B cell (primary cell): ENCODE measurements at regions of chr7 and their contacts with region 1.

Region 1: GRCh38 chr7:155298834-155299534 is 1.3 kb downstream of the INSIG1 start:
- DNase-seq: peak; percentile 98
- ATAC-seq: peak; percentile 72
- H3K4me3 ChIP-seq: peak overlapping the region; percentile 58 to 91 (median 79)
- H3K4me3 Mint-ChIP-seq: peak overlapping the region; percentile 94
- H3K27ac ChIP-seq: peak overlapping the region; percentile 88 to 98
- H3K27ac Mint-ChIP-seq: peak overlapping the region; percentile 97
- H3K4me1 ChIP-seq: peaks cover 26 to 34% of the 10 kb centered on the region in 2 donors
- H3K4me1 Mint-ChIP-seq: peaks cover 38% of the 10 kb centered on the region
- H3K27me3 ChIP-seq: no peaks in the 10 kb centered on the region
- H3K27me3 Mint-ChIP-seq: no peaks in the 10 kb centered on the region
- CTCF ChIP-seq: no peak

Region 2: DNA sequence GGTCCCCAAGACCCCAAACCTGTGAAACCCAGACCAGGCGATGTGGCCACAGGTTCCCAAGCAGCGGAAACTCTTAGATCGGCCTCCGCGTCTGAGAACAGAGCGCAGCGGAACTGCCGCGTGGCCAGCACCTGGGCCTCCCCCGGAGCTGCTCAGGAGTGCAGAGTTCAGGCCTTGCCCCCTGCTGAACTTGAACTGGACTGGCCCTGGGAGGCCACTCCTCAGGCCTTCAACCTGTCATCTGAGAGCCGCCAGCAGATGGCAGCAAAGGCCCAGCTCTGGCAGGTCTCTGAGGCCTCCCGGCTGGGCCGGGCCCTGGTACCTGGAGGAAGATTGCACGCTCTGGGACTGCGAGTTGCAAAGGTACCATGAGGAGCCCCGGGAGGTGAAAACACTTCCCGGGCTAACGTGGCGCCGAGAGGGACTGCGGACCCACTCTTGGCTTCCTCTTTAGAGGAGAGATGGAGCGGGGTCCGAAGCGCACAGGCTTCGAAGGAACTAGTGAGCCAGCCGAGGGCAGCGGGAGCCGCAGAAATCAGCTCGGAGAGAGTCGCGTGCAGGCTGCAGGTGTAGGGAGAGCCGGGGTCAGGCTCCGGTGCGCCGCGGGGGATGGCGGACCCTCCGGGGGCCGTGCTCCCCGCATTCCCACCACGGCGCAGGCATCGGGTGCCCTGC is 385.2 kb before region 1 on chr7:
- CTCF ChIA-PET with region 1: interaction called, 7 read pairs
- POLR2A ChIA-PET with region 1: no interaction called
- intact Hi-C with region 1: loop called (anchors 5 kb)
- DNase-seq: peak; percentile 86
- ATAC-seq: peak; percentile 97
- H3K4me3 ChIP-seq: peak overlapping the region in 4 of 5 experiments; percentile 38 to 64 (median 50)
- H3K4me3 Mint-ChIP-seq: peak overlapping the region; percentile 92
- H3K27ac ChIP-seq: no peak overlapping the region
- H3K27ac Mint-ChIP-seq: no peak overlapping the region
- H3K4me1 ChIP-seq: peaks cover 7 to 9% of the 10 kb centered on the region in 2 donors
- H3K4me1 Mint-ChIP-seq: peaks cover 5% of the 10 kb centered on the region
- H3K27me3 ChIP-seq: peaks cover 0 to 20% (median 9%) of the 10 kb centered on the region in 4 experiments
- H3K27me3 Mint-ChIP-seq: peaks cover 45% of the 10 kb centered on the region
- CTCF ChIP-seq: peak; percentile 96

Region 3: DNA sequence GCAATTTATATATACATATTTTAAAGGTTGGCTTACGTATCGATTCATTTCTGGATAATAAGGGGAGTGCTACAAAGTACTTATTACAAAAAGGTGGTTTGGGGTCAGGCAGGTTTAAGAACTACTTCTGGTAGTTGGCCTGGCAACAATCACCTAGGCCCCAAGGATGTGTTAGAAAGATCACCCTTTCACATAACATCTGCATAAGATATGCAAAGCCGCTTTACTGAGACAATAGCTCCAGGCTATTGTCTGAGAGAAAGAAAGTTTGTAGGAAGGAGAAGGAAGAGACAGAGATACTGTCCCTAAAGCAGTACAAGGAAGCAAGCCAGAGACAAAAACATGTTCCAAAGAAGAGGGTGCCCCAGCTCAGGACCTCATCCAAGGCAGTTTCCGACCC is 302.2 kb before region 1 on chr7:
- CTCF ChIA-PET with region 1: no interaction called
- POLR2A ChIA-PET with region 1: no interaction called
- intact Hi-C with region 1: no loop called
- DNase-seq: no peak
- ATAC-seq: no peak
- H3K4me3 ChIP-seq: no peak overlapping the region
- H3K4me3 Mint-ChIP-seq: no peak overlapping the region
- H3K27ac ChIP-seq: no peak overlapping the region
- H3K27ac Mint-ChIP-seq: no peak overlapping the region
- H3K4me1 ChIP-seq: peaks cover 1 to 2% of the 10 kb centered on the region in 2 donors
- H3K4me1 Mint-ChIP-seq: peaks cover 2% of the 10 kb centered on the region
- H3K27me3 ChIP-seq: no peaks in the 10 kb centered on the region
- H3K27me3 Mint-ChIP-seq: no peaks in the 10 kb centered on the region
- CTCF ChIP-seq: no peak

Region 4: GRCh38 chr7:155190688-155191087 is 108.3 kb before region 1 on chr7:
- CTCF ChIA-PET with region 1: interaction called, 10 read pairs
- POLR2A ChIA-PET with region 1: no interaction called
- intact Hi-C with region 1: loop called (anchors 5 kb)
- DNase-seq: peak; percentile 68
- ATAC-seq: peak; percentile 85
- H3K4me3 ChIP-seq: no peak overlapping the region
- H3K4me3 Mint-ChIP-seq: no peak overlapping the region
- H3K27ac ChIP-seq: no peak overlapping the region
- H3K27ac Mint-ChIP-seq: no peak overlapping the region
- H3K4me1 ChIP-seq: peaks cover 4 to 5% of the 10 kb centered on the region in 2 donors
- H3K4me1 Mint-ChIP-seq: peaks cover 2% of the 10 kb centered on the region
- H3K27me3 ChIP-seq: peaks cover 0 to 4% (median 2%) of the 10 kb centered on the region in 4 experiments
- H3K27me3 Mint-ChIP-seq: peaks cover 10% of the 10 kb centered on the region
- CTCF ChIP-seq: peak; percentile 86

Region 5: DNA sequence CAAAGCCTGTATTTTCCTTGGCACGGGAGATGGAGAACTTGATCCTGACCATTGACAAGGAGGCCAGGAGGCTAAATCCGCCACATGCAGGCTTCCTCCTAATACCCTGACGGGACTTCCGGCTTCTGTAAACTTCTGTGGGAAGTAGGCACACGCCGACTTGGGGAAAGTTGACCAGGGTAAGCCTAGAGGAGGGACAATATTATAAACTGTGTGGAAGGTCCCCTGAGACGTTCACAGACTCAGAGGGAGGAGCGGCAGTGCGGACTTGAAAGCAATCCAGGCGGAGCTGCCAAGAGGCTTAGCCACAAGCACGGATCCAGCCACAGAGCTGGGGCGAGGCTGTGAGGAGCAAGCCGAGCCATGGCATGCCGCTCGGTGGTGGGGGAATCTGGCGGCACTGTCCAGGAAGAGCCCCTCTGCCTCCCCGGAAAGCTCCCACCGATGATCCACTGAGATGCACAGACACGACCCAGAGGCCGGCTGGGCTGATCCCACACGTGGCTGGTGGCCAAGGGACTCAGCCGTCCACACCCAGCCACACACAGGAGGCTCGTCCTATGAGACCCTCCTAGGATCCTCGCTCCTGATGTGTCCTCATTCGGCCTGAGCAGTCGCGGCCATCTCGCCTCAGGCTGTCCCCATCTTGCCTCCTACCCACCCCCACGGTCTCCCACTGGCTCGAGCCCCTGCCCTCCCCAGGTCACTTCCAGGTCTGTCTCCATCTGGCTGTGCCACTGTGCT is 41.3 kb before region 1 on chr7:
- CTCF ChIA-PET with region 1: no interaction called
- POLR2A ChIA-PET with region 1: no interaction called
- intact Hi-C with region 1: no loop called
- DNase-seq: no peak
- ATAC-seq: no peak
- H3K4me3 ChIP-seq: no peak overlapping the region
- H3K4me3 Mint-ChIP-seq: no peak overlapping the region
- H3K27ac ChIP-seq: no peak overlapping the region
- H3K27ac Mint-ChIP-seq: no peak overlapping the region
- H3K4me1 ChIP-seq: no peaks in the 10 kb centered on the region
- H3K4me1 Mint-ChIP-seq: no peaks in the 10 kb centered on the region
- H3K27me3 ChIP-seq: no peaks in the 10 kb centered on the region
- H3K27me3 Mint-ChIP-seq: peaks cover 18% of the 10 kb centered on the region
- CTCF ChIP-seq: no peak

Region 6: GRCh38 chr7:155344600-155345433 is 45.8 kb after region 1 on chr7:
- CTCF ChIA-PET with region 1: interaction called, 76 read pairs
- POLR2A ChIA-PET with region 1: interaction called, 4 read pairs
- intact Hi-C with region 1: no loop called
- DNase-seq: peak; percentile 88
- ATAC-seq: peak; percentile 91
- H3K4me3 ChIP-seq: peak overlapping the region in 4 of 5 experiments; percentile 25 to 58 (median 52)
- H3K4me3 Mint-ChIP-seq: peak overlapping the region; percentile 82
- H3K27ac ChIP-seq: no peak overlapping the region
- H3K27ac Mint-ChIP-seq: peak overlapping the region; percentile 71
- H3K4me1 ChIP-seq: peaks cover 12 to 13% of the 10 kb centered on the region in 2 donors
- H3K4me1 Mint-ChIP-seq: peaks cover 5% of the 10 kb centered on the region
- H3K27me3 ChIP-seq: peaks cover 0 to 26% (median 6%) of the 10 kb centered on the region in 4 experiments
- H3K27me3 Mint-ChIP-seq: peaks cover 4% of the 10 kb centered on the region
- CTCF ChIP-seq: peak; percentile 89

Region 7: GRCh38 chr7:155584763-155585531 is 286.0 kb after region 1 on chr7:
- CTCF ChIA-PET with region 1: no interaction called
- POLR2A ChIA-PET with region 1: no interaction called
- intact Hi-C with region 1: no loop called
- DNase-seq: no peak
- ATAC-seq: no peak
- H3K4me3 ChIP-seq: no peak overlapping the region
- H3K4me3 Mint-ChIP-seq: no peak overlapping the region
- H3K27ac ChIP-seq: no peak overlapping the region
- H3K27ac Mint-ChIP-seq: no peak overlapping the region
- H3K4me1 ChIP-seq: peaks cover 0 to 3% of the 10 kb centered on the region in 2 donors
- H3K4me1 Mint-ChIP-seq: no peaks in the 10 kb centered on the region
- H3K27me3 ChIP-seq: peaks cover 0 to 29% (median 0%) of the 10 kb centered on the region in 4 experiments
- H3K27me3 Mint-ChIP-seq: peaks cover 48% of the 10 kb centered on the region
- CTCF ChIP-seq: no peak

Region 8: DNA sequence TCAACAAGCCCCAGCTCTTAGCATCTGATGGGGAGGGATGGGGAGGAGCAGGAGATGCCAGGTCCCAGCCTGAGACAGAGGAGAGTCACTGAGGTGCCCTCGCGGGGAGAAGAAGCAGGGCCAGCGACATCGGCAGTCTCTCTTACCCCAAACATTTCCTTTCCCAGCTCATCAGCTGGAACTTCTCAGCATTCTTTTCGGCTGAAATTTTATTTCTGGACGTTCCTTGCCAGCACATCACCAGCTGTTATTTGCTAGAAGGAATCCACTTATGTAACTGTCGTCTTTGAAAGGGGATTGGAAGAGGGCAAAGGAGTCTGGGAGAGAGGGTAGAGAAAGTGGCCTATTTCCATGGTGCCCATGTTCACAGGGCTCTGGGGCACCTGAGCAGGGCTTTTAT is 614.3 kb after region 1 on chr7:
- CTCF ChIA-PET with region 1: no interaction called
- POLR2A ChIA-PET with region 1: no interaction called
- intact Hi-C with region 1: no loop called
- DNase-seq: peak; percentile 13
- ATAC-seq: no peak
- H3K4me3 ChIP-seq: no peak overlapping the region
- H3K4me3 Mint-ChIP-seq: no peak overlapping the region
- H3K27ac ChIP-seq: no peak overlapping the region
- H3K27ac Mint-ChIP-seq: no peak overlapping the region
- H3K4me1 ChIP-seq: no peaks in the 10 kb centered on the region
- H3K4me1 Mint-ChIP-seq: no peaks in the 10 kb centered on the region
- H3K27me3 ChIP-seq: no peaks in the 10 kb centered on the region
- H3K27me3 Mint-ChIP-seq: no peaks in the 10 kb centered on the region
- CTCF ChIP-seq: no peak

Region 9: GRCh38 chr7:156640257-156640948 is 1341.4 kb after region 1 on chr7 and contains the start of gene RNF32:
- CTCF ChIA-PET with region 1: no interaction called
- POLR2A ChIA-PET with region 1: interaction called, 3 read pairs
- intact Hi-C with region 1: loop called (anchors 2 kb)
- DNase-seq: peak; percentile 98
- ATAC-seq: peak; percentile 82
- H3K4me3 ChIP-seq: peak within 1 kb of the TSS in 4 of 5 experiments; percentile 64 to 96 (median 85)
- H3K4me3 Mint-ChIP-seq: peak within 1 kb of the TSS; percentile 96
- H3K27ac ChIP-seq: peak within 1 kb of the TSS; percentile 80 to 98
- H3K27ac Mint-ChIP-seq: peak within 1 kb of the TSS; percentile 97
- H3K4me1 ChIP-seq: peaks cover 11 to 26% of the 10 kb centered on the region in 2 donors
- H3K4me1 Mint-ChIP-seq: peaks cover 36% of the 10 kb centered on the region
- H3K27me3 ChIP-seq: peaks cover 0 to 4% (median 0%) of the 10 kb centered on the region in 4 experiments
- H3K27me3 Mint-ChIP-seq: no peaks in the 10 kb centered on the region
- CTCF ChIP-seq: no peak
- total RNA-seq, gene RNF32: 2.3 and 3.4 TPM in 2 replicates